Ascending aorta (tissue), 2 donors: ENCODE measurements at regions of chr6 and their contacts with region 1.

Region 1: DNA sequence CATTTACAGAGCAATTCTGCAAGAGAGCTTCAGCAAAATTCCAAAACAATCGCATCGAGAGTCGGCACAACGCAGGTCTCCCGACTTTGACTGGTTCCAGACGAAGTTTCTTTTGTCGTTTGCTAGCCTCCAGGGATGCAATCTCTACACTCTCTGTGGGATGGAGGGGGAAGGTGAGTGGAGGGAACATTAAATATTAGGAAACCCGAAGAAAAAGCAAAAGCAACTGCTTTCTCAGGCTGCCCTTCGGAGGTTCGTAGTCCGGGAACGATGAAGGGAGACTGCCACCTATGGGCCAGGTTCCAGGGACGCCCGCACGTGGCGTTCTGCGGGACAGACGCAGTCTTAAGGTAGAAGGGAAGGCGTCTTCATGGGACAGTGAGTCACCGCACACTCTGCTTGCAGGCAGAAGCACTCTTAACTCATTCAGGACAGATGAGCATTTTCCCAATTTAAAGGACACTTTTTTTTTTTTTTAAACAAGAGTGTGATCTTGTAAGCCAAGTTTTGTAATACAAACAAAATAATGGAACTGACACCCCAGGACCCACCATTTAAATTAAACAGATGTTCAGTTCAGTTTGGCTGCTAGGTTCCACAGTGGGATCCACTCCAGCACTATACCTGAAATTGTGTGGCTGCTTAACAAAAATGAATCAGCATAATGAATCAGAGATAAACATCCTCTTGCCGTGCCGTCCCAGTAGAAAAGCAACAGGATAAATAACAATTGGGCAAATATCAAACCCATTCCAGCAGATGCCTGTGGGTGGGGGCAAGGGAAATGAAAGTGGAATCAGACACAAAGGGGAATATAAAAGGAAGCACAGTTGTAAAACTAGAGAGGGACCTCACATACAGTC is 65.8 kb upstream of the ARMC2 start:
- DNase-seq: peak; percentile 56 to 90
- H3K4me3 ChIP-seq: peak overlapping the region; percentile 47 to 61
- H3K27ac ChIP-seq: peak overlapping the region in 1 of 2 donors; percentile 10
- H3K4me1 ChIP-seq: peaks cover 0 to 12% of the 10 kb centered on the region in 2 donors
- H3K27me3 ChIP-seq: no peaks in the 10 kb centered on the region
- CTCF ChIP-seq: peak; percentile 66 to 79 (median 66)

Region 2: GRCh38 chr6:108541838-108542759 is 240.3 kb before region 1 on chr6:
- intact Hi-C with region 1: loop called (anchors 5 kb)
- DNase-seq: peak in 1 of 2 donors; percentile 75
- H3K4me3 ChIP-seq: no peak overlapping the region
- H3K27ac ChIP-seq: no peak overlapping the region
- H3K4me1 ChIP-seq: no peaks in the 10 kb centered on the region
- H3K27me3 ChIP-seq: no peaks in the 10 kb centered on the region
- CTCF ChIP-seq: peak; percentile 79 to 83 (median 82)

Region 3: GRCh38 chr6:108609276-108609769 is 173.1 kb before region 1 on chr6:
- intact Hi-C with region 1: no loop called
- DNase-seq: no peak
- H3K4me3 ChIP-seq: peak overlapping the region in 1 of 2 donors; percentile 2
- H3K27ac ChIP-seq: peak overlapping the region; percentile 55 to 74
- H3K4me1 ChIP-seq: peaks cover 9 to 53% of the 10 kb centered on the region in 2 donors
- H3K27me3 ChIP-seq: no peaks in the 10 kb centered on the region
- CTCF ChIP-seq: no peak

Region 4: GRCh38 chr6:108627692-108628550 is 154.5 kb before region 1 on chr6:
- intact Hi-C with region 1: no loop called
- DNase-seq: no peak
- H3K4me3 ChIP-seq: no peak overlapping the region
- H3K27ac ChIP-seq: peak overlapping the region in 1 of 2 donors; percentile 4
- H3K4me1 ChIP-seq: peaks cover 32 to 56% of the 10 kb centered on the region in 2 donors
- H3K27me3 ChIP-seq: no peaks in the 10 kb centered on the region
- CTCF ChIP-seq: no peak

Region 5: GRCh38 chr6:108807928-108808327 is 25.5 kb after region 1 on chr6:
- intact Hi-C with region 1: no loop called
- DNase-seq: no peak
- H3K4me3 ChIP-seq: no peak overlapping the region
- H3K27ac ChIP-seq: no peak overlapping the region
- H3K4me1 ChIP-seq: peaks cover 0 to 10% of the 10 kb centered on the region in 2 donors
- H3K27me3 ChIP-seq: no peaks in the 10 kb centered on the region
- CTCF ChIP-seq: no peak

Region 6: GRCh38 chr6:108835218-108835850 is 52.9 kb after region 1 on chr6:
- intact Hi-C with region 1: loop called (anchors 1 kb)
- DNase-seq: peak; percentile 58 to 94
- H3K4me3 ChIP-seq: no peak overlapping the region
- H3K27ac ChIP-seq: peak overlapping the region; percentile 9 to 30
- H3K4me1 ChIP-seq: peaks cover 0 to 11% of the 10 kb centered on the region in 2 donors
- H3K27me3 ChIP-seq: no peaks in the 10 kb centered on the region
- CTCF ChIP-seq: peak; percentile 83 to 93 (median 87)

Region 7: GRCh38 chr6:108874470-108875160 is 92.2 kb after region 1 on chr6:
- intact Hi-C with region 1: loop called (anchors 5 kb)
- DNase-seq: peak in 1 of 2 donors; percentile 72
- H3K4me3 ChIP-seq: peak overlapping the region in 1 of 2 donors; percentile 36
- H3K27ac ChIP-seq: peak overlapping the region; percentile 80 to 90
- H3K4me1 ChIP-seq: peaks cover 8 to 44% of the 10 kb centered on the region in 2 donors
- H3K27me3 ChIP-seq: no peaks in the 10 kb centered on the region
- CTCF ChIP-seq: no peak

Region 8: GRCh38 chr6:109073344-109074132 is 291.1 kb after region 1 on chr6:
- intact Hi-C with region 1: loop called (anchors 2 kb)
- DNase-seq: no peak
- H3K4me3 ChIP-seq: no peak overlapping the region
- H3K27ac ChIP-seq: no peak overlapping the region
- H3K4me1 ChIP-seq: peaks cover 0 to 3% of the 10 kb centered on the region in 2 donors
- H3K27me3 ChIP-seq: no peaks in the 10 kb centered on the region
- CTCF ChIP-seq: peak; percentile 45 to 68 (median 63)